ENCODE measurements at regions of chr19 and their contacts with region 1.

Region 1: GRCh38 chr19:58252102-58252685 is 23.5 kb downstream of the ZNF544 start:
- DNase-seq: no peak
- ATAC-seq: no peak

Region 2: DNA sequence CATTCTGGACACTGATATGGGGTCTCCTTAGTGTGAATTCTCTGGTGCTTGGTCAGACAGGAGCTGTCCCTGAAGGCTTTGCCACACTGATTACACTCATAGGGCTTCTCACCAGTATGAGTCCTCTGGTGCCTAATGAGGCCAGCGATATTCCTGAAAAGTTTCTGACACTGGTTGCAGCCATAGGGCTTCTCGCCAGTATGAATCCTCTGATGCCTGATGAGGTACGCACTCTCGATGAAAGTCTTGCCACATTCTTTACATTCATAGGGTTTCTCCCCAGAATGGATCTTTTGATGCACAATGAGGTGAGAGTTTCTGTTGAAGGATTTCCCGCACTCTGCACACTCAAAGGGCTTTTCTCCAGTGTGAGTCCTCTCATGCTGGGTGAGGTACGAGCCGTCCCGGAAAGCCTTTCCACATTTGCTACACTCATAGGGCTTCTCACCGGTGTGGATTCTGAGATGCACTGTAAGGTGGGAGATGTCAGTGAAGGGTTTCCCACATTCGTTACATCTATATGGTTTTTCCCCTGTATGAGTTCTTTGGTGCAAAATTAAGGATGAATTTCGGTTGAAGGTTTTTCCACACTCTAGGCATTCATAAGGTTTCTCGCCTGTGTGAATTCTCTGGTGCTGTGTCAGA is 124.0 kb before region 1 on chr19:
- intact Hi-C with region 1: loop called (anchors 10 kb)
- DNase-seq: no peak
- ATAC-seq: no peak

Region 3: GRCh38 chr19:58170860-58171259 is 81.3 kb before region 1 on chr19:
- intact Hi-C with region 1: no loop called
- DNase-seq: no peak
- ATAC-seq: no peak

Region 4: DNA sequence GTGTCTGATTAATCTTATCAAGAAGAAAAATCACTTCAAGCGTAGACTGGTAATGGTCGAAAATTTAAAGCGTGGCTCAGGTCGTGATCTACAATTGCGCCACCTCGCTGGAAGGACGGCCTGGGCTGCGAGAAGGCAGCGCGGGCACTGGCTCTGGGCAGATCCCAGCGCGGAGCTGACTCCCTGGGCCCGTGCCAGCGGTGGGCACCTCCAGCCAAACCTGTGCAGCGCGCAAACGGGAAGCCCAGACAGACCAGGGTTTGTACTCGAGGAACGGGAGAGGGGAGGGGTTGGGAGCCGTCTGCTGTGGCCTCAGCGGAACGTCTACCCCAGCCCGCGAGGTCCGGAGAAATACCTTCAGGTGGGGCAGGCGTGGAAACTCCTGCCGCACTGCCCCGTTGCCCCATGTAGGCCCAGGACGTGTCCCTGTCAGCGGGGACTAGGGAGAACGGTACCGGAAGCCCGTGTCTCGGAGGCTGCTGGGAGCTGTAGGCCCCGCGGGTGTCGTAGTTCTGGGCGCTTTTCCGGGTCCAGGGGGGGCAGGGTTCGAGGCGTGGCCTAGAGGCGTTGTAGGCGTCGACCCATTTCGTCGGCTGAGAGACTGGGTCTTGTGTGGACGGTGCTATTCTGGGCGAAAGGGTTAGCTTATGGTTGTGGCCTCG is 48.2 kb before region 1 on chr19:
- intact Hi-C with region 1: loop called (anchors 10 kb)
- DNase-seq: no peak
- ATAC-seq: no peak

Region 5: DNA sequence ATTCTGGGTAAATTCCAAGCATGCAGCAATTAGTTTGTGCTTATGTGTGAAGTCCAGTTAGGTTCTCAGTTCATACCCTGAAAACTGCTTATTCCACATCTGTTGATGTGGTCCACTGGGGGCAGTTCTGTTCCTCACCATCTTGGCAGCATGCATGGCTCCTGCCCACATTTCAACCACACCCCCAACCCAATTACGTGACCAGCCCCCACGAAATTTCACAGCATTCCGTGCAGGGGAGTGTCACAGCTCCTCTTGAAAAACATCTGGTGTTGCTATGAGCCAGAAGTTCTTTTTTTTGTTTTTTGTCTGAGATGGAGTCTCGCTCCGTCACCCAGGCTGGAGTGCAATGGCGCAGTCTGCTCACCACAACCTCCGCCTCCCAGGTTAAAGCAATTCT is 43.9 kb after region 1 on chr19:
- intact Hi-C with region 1: no loop called
- DNase-seq: no peak
- ATAC-seq: no peak

Region 6: GRCh38 chr19:58317476-58318072 is 65.4 kb after region 1 on chr19:
- intact Hi-C with region 1: no loop called
- DNase-seq: no peak
- ATAC-seq: peak; percentile 28

Measured in left ventricle myocardium superior (tissue), 1 donor.